ENCODE measurements at regions of chr1 and their contacts with region 1.

Region 1: DNA sequence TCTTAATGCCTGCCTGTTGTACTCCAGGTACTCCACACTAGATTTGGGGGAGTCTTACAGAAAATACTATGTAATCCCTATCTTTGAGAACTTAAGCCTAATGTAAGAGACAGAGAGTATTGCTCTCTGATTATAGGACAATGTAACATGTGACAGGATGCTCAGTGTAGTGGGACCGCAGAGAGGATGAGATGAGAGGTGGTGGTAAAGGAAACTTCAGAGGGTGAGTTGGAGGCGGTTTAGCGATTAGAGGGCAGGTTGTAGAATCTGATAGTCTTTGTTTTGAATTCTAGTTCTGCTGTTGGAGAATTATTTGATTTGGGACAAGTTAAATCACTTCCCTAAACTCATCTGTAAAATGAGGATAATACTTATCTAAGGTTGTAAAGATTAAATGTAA is 5.4 kb downstream of the SOAT1 start:
- DNase-seq: peak; percentile 79
- ATAC-seq: peak; percentile 86
- H3K4me3 Mint-ChIP-seq: peak overlapping the region; percentile 14
- H3K27ac Mint-ChIP-seq: peak overlapping the region; percentile 88
- H3K4me1 Mint-ChIP-seq: peaks cover 62% of the 10 kb centered on the region
- H3K27me3 Mint-ChIP-seq: no peaks in the 10 kb centered on the region
- CTCF ChIP-seq: no peak

Region 2: GRCh38 chr1:179129702-179130473 is 169.1 kb before region 1 on chr1:
- CTCF ChIA-PET with region 1: interaction called, 3 read pairs
- POLR2A ChIA-PET with region 1: no interaction called
- intact Hi-C with region 1: loop called (anchors 5 kb)
- DNase-seq: peak; percentile 20
- ATAC-seq: peak; percentile 96
- H3K4me3 Mint-ChIP-seq: peak overlapping the region; percentile 71
- H3K27ac Mint-ChIP-seq: peak overlapping the region; percentile 98
- H3K4me1 Mint-ChIP-seq: peaks cover 31% of the 10 kb centered on the region
- H3K27me3 Mint-ChIP-seq: no peaks in the 10 kb centered on the region
- CTCF ChIP-seq: no peak

Region 3: GRCh38 chr1:179840107-179840506 is 541.2 kb after region 1 on chr1:
- CTCF ChIA-PET with region 1: no interaction called
- POLR2A ChIA-PET with region 1: no interaction called
- intact Hi-C with region 1: no loop called
- DNase-seq: no peak
- ATAC-seq: no peak
- H3K4me3 Mint-ChIP-seq: no peak overlapping the region
- H3K27ac Mint-ChIP-seq: no peak overlapping the region
- H3K4me1 Mint-ChIP-seq: peaks cover 2% of the 10 kb centered on the region
- H3K27me3 Mint-ChIP-seq: no peaks in the 10 kb centered on the region
- CTCF ChIP-seq: no peak

Measured in activated CD8-positive, alpha-beta T cell treated with anti-CD3 and anti-CD28 coated beads for 36 hours (primary cell).